ENCODE measurements at regions of chr7 and their contacts with region 1.

Region 1: GRCh38 chr7:8056431-8056830 is 87.8 kb downstream of the GLCCI1 start:
- DNase-seq: no peak
- H3K4me3 ChIP-seq: no peak overlapping the region
- H3K27ac ChIP-seq: no peak overlapping the region
- H3K4me1 ChIP-seq: no peaks in the 10 kb centered on the region
- H3K27me3 ChIP-seq: no peaks in the 10 kb centered on the region
- CTCF ChIP-seq: no peak

Region 2: DNA sequence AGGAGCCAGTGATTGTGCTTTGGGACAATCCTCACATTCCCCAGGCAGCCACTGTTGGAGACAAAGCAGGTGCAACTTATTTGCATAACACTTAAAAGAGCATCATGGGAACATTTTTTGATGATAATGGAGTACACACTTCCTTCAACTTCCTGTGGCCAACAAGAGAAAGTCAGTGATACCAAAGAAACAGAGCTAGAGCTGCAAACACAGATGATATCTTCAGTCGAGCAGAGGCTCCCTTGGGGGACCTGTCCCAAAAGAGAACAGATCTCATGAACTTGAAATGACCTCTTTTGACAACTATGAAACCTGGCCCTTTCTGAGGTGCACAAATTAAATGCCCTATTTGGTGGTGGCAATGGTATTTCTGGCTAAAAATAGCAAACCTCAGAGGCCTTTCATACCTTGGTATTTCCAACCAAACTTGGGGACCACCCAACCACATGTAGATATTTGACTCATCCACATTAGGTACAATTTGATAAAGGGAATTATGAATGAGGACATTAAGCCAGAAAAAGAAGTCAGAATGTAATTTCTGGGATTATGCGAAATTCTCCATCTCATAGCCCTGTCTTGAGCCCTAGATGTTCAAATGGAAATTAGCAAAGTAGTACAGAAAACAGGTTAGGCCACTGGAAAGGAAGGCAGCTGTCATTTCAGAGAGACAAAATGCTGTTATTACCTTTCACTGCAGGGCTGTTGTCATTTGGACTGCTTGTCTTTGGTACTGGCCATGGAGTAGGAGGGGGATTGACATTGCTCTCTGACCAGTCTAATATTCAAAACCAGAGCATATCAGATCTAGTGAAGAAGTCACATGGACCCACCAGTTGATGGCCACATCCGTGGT is 59.3 kb after region 1 on chr7:
- intact Hi-C with region 1: loop called (anchors 10 kb)
- DNase-seq: no peak
- H3K4me3 ChIP-seq: no peak overlapping the region
- H3K27ac ChIP-seq: no peak overlapping the region
- H3K4me1 ChIP-seq: no peaks in the 10 kb centered on the region
- H3K27me3 ChIP-seq: no peaks in the 10 kb centered on the region
- CTCF ChIP-seq: no peak